H1 (cell line): ENCODE measurements at regions of chr3 and their contacts with region 1.

Region 1: GRCh38 chr3:184164648-184165330 is 9.6 kb downstream of the DVL3 start:
- DNase-seq: no peak
- H3K4me3 ChIP-seq: no peak overlapping the region
- H3K27ac ChIP-seq: no peak overlapping the region
- H3K4me1 ChIP-seq: no peaks in the 10 kb centered on the region
- H3K27me3 ChIP-seq: no peaks in the 10 kb centered on the region
- CTCF ChIP-seq: no peak
- EP300 ChIP-seq: no peak
- POLR2A ChIP-seq: no peak
- RAD21 ChIP-seq: no peak

Region 2: DNA sequence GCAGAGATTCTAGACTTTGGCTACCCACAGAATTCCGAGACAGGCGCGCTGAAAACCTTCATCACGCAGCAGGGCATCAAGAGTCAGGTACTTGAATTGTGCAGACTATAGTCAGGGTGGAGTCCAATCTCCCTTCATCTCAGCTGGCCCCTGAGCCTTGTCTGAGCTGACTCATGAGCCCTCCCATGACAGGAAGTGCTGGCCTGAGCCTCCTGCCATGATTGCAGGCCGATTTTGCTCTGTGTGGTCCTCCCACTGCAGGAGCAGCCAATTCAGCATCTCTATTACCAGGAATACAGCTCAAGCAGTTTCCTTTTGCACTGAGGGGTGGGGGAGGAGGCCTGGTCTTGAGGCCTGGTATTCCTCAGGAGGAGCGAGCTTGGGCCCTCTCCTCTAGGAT is 15.4 kb after region 1 on chr3:
- CTCF ChIA-PET with region 1: interaction called, 10 read pairs
- POLR2A ChIA-PET with region 1: interaction called, 4 read pairs
- DNase-seq: no peak
- H3K4me3 ChIP-seq: no peak overlapping the region
- H3K27ac ChIP-seq: no peak overlapping the region
- H3K4me1 ChIP-seq: peaks cover 0 to 26% (median 18%) of the 10 kb centered on the region in 4 experiments; a peak in 6 of 7 replicates
- H3K27me3 ChIP-seq: no peaks in the 10 kb centered on the region
- CTCF ChIP-seq: no peak
- EP300 ChIP-seq: no peak
- POLR2A ChIP-seq: no peak
- RAD21 ChIP-seq: no peak